ENCODE measurements at regions of chr2 and their contacts with region 1.

Region 1: DNA sequence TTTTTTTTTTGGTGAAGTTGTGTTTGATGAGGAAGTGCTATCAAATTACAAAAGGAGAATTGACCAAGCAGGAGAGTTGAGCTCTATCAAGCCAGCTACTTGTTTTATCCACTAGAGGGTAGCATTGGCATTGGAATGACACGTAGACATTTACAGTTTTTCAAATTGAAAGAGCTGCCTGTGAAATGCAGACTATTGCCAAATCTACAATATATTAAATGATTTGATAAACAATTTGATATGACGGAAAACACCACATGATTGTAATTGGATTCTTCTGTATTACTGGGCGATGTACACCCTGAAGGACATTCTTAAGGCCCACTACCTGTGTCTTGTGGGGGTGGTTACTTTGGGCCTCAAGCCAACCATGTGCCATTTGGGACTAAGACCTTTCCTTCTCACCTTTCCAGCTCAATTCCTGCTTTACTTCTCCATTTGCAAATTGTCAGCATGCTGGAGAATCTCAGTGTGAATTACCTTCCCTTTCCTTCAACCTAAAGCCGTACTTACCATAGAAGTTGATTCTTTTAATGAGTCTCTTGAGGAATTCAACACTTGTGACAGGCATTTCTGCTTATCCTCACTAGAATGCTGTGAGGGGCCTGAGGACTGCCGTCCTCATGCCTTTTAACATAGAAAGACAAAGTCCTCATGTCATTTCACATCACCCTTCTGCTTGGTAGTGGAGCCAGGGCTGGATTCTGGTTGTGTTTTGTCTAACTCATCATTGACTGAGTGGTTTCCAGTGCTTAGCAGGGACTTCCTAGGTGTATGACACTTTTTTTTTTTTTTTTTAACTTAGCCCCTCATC is 134.8 kb upstream of the THUMPD2 start:
- DNase-seq: peak; percentile 63
- H3K4me3 ChIP-seq: no peak overlapping the region
- H3K27ac ChIP-seq: peak overlapping the region; percentile 22
- H3K27me3 ChIP-seq: no peaks in the 10 kb centered on the region
- CTCF ChIP-seq: peak; percentile 73

Region 2: DNA sequence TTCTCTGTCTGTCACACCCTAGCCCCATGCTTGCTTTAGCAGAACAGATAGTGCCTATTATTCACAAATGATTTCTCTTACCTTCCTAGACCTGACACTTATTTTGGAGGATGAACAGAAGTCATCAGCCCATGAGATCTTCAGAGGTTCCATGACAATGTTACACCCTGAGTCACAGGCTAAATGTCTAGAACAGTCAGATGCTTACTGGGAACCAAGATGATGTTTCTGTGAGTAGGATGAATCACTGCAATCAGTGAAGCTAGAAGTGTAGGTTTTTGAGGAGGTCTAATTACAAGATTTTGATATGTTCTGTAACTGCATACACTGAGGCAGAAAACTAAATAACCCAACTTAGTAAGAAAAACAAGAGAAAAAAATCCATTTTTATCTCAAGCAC is 11.8 kb before region 1 on chr2:
- CTCF ChIA-PET with region 1: no interaction called
- POLR2A ChIA-PET with region 1: no interaction called
- DNase-seq: peak; percentile 15
- H3K4me3 ChIP-seq: no peak overlapping the region
- H3K27ac ChIP-seq: no peak overlapping the region
- H3K27me3 ChIP-seq: no peaks in the 10 kb centered on the region
- CTCF ChIP-seq: no peak

Region 3: DNA sequence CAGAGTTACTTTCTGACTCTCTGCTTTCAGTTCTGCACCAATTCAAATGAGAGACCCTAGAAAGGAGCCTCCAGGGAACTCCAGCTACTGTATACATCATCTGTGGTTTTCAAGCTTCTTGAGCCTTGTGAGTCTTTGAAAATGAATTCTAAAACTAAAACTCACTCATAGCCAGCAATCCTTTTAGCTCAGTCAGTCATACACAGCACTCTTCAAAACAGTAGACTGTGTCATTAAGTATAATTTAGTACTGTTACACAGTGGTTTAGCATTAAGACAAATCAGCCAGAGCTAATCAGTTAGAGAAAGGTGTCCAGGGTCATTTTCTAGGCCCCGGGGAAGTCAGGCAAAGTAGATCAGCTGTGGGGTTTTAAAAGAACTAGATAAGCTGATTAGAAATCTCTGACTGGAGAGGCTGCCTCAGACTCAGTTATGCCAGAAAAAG is 187.3 kb after region 1 on chr2:
- CTCF ChIA-PET with region 1: interaction called, 17 read pairs
- POLR2A ChIA-PET with region 1: interaction called, 4 read pairs
- DNase-seq: peak; percentile 74
- H3K4me3 ChIP-seq: no peak overlapping the region
- H3K27ac ChIP-seq: peak overlapping the region; percentile 81
- H3K27me3 ChIP-seq: no peaks in the 10 kb centered on the region
- CTCF ChIP-seq: no peak

Region 4: GRCh38 chr2:40202798-40203400 is 289.0 kb after region 1 on chr2:
- CTCF ChIA-PET with region 1: interaction called, 11 read pairs
- POLR2A ChIA-PET with region 1: no interaction called
- DNase-seq: no peak
- H3K4me3 ChIP-seq: no peak overlapping the region
- H3K27ac ChIP-seq: no peak overlapping the region
- H3K27me3 ChIP-seq: no peaks in the 10 kb centered on the region
- CTCF ChIP-seq: no peak

Region 5: DNA sequence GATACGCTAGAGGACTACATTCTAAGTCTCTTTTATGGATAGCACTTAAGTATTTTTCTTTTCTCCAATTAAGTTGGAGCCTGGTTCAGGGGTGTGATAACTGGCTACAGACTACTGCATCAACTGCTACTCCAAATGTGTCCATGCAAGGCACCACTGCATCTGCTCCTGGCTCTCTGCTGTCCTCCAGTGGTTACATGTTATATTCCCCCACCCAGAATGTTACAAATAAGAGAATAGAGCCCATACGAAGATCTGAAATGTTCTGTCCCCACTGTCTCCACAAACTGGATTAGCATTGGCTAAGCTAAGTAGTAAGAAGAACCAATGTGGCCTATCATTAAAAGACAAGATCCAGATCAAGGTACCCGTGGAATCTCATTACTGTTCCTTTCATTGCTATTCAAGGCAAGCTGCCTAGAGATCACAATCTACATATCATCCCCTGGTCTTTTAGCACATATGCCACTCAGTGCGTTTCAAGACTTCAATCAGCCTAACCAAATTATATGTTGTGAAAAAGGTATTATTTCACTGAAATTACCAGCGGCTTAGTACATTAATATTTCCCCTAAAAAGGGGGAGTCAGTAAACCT is 846.3 kb after region 1 on chr2:
- CTCF ChIA-PET with region 1: interaction called, 10 read pairs
- POLR2A ChIA-PET with region 1: no interaction called
- DNase-seq: peak; percentile 29
- H3K4me3 ChIP-seq: no peak overlapping the region
- H3K27ac ChIP-seq: no peak overlapping the region
- H3K27me3 ChIP-seq: no peaks in the 10 kb centered on the region
- CTCF ChIP-seq: peak; percentile 98